ENCODE measurements at regions of chr11 and their contacts with region 1.

Region 1: DNA sequence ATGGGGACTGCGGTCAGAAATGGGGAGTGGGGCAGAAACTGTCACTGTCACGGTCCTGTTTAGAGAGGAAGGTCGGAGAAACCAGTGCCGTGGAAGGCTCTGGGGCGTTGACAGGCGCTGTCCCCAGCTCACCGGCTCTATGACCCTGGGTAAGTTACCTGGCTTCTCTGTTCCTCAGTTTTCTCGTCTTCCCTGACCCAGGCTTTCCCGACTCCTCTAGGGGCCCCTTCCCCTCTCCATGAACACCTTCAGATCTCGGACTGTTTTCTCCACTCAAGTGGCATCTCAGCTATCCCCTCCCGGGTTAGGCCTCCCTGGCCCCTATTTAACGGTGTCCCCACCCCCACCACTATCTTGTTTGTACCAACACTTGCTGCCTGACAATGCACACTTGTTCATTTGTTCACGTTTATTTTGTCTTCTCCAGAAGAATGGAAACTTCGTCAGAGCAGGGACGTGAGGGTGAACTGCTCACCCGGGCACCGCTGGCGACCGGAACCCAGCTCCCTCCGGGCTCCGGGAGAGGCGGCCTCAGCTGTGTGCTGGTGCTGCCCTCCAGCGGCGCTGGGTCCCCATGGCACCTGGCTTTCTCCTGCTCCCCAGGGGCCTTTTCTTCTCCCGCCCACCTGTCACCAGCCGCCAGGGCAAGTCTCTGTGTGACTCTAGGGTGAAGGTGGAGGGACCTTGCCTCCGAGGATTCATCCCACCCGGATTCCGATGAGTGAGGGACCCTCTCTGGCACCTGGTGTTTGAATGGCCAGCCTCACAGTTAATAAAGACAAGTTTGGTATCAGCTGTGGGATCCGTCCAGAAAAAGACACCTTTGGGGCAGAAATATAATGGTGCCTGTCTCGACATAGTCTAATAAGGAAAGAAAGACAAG is 33.1 kb upstream of the SLC35C1 start:
- DNase-seq: peak; percentile 67 to 82 (median 75)
- H3K4me3 ChIP-seq: peak overlapping the region; percentile 91
- H3K4me3 Mint-ChIP-seq: peak overlapping the region; percentile 86 to 99 (median 92)
- H3K27ac ChIP-seq: peak overlapping the region; percentile 18
- H3K27ac Mint-ChIP-seq: peak overlapping the region; percentile 65 to 98 (median 86)
- H3K4me1 ChIP-seq: peaks cover 8% of the 10 kb centered on the region
- H3K4me1 Mint-ChIP-seq: peaks cover 17 to 27% (median 26%) of the 10 kb centered on the region in 3 donors
- H3K27me3 ChIP-seq: peaks cover 5% of the 10 kb centered on the region
- H3K27me3 Mint-ChIP-seq: peaks cover 2 to 4% of the 10 kb centered on the region in 2 donors

Region 2: DNA sequence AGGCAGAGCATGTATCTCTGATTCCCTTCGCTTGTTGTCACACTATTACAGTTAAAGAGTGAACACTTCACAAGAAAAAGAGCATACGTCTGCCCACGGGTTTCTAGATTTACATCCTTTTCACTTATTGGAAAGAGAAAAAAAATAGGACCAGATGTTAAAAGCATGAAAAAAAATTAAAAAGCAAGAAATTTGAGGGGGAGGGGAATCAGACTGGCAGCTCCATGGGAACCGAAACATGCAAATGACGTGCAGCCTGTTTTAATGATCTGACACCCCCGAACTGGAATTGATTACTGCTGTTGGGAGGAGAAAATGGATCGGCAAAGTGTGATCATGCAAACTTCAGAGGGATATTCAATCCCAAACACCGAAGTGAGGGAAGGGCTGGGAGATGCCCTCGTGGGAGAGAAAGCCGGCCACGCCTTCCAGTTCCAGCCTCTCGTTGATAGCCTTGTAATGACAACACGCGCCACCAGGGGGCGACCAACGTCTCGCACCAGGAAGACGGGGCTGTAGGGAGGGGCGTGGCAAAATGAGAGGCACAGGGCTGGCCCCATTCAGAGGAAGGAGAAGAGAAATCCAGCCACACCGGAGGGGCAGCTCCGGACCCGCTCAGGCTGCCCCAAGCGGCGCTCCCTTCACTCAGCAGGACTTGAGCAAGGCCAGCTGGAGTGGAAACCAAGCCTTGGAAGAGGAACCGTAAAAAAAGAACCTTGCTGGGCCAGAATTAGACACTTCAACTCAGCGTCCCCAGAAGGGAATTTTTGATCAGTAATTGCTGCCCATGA is 431.9 kb before region 1 on chr11:
- CTCF ChIA-PET with region 1: interaction called, 10 read pairs
- POLR2A ChIA-PET with region 1: no interaction called
- DNase-seq: peak; percentile 83 to 94 (median 89)
- H3K4me3 ChIP-seq: peak overlapping the region; percentile 51
- H3K4me3 Mint-ChIP-seq: peak overlapping the region in 6 of 7 donors; percentile 3 to 75 (median 68)
- H3K27ac ChIP-seq: no peak overlapping the region
- H3K27ac Mint-ChIP-seq: peak overlapping the region in 1 of 8 donors; percentile 14
- H3K4me1 ChIP-seq: peaks cover 4% of the 10 kb centered on the region
- H3K4me1 Mint-ChIP-seq: peaks cover 10 to 11% (median 11%) of the 10 kb centered on the region in 3 donors
- H3K27me3 ChIP-seq: no peaks in the 10 kb centered on the region
- H3K27me3 Mint-ChIP-seq: peaks cover 22 to 31% of the 10 kb centered on the region in 2 donors

Region 3: DNA sequence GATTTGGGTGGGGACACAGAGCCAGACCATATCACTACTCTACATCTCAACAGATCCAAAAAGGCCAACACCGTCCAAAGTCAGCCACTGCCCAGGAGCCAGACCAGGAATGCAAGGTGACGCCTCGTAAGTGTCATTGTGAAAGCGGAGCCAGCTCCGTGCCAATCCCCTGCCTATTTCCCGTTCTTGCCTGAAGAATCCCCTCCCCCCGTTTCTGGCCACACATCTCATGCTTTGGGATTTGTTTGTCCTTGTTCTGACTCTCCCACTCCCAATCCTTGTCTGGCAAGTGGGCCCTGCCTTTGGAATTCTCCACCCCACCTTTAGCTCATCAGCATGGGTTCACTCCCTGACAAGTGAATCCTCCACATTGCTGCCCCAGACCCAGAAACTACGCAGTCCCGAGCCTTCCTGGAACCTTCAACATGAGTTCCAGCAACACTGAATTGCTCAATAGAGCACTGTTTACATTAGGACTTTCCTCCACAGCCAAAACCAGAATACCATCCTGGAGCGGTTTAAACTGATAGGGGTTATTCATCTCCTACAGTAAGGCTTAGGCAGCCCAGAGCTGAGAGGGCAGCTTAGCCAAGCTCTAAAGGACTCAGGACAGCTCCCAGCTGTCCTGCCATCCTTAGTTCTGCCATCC is 27.1 kb after region 1 on chr11:
- CTCF ChIA-PET with region 1: interaction called, 17 read pairs
- POLR2A ChIA-PET with region 1: interaction called, 3 read pairs
- DNase-seq: no peak
- H3K4me3 ChIP-seq: no peak overlapping the region
- H3K4me3 Mint-ChIP-seq: no peak overlapping the region
- H3K27ac ChIP-seq: no peak overlapping the region
- H3K27ac Mint-ChIP-seq: no peak overlapping the region
- H3K4me1 ChIP-seq: no peaks in the 10 kb centered on the region
- H3K4me1 Mint-ChIP-seq: peaks cover 0 to 4% (median 1%) of the 10 kb centered on the region in 3 donors
- H3K27me3 ChIP-seq: no peaks in the 10 kb centered on the region
- H3K27me3 Mint-ChIP-seq: no peaks in the 10 kb centered on the region

Region 4: DNA sequence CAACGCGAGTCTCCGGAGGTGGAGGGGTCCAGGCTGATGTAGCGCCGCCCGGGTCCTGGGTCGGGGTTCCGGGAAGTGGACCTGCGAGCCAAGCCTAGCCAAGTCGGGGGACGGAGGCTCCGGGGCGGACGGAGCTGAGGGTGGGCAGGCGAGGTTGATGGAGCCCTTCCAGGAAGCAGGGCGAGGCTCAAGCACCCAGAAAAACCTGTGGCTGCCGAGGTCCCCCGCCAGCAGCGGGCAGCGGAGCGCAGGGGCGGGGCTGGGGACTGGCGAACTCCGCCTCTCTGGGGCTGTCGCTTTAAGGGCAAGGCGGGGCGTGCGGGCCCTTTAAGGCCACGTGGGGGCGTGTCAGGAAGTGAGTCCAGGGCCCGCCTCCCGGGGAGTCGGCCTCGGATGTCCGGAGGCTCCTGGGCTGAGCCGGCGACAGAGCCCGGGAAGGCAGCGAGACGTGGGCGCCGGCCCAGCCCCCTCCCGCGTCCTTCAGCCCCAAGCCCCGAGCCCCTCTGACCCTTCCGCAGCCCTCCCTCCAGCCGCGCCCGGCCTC is 33.0 kb after region 1 on chr11 and contains the start of gene SLC35C1:
- CTCF ChIA-PET with region 1: interaction called, 17 read pairs
- POLR2A ChIA-PET with region 1: interaction called, 3 read pairs
- DNase-seq: peak; percentile 92 to 96 (median 95)
- H3K4me3 ChIP-seq: peak within 1 kb of the TSS; percentile 83
- H3K4me3 Mint-ChIP-seq: peak within 1 kb of the TSS; percentile 87 to 99 (median 92)
- H3K27ac ChIP-seq: peak within 1 kb of the TSS; percentile 74
- H3K27ac Mint-ChIP-seq: peak within 1 kb of the TSS; percentile 80 to 98 (median 91)
- H3K4me1 ChIP-seq: peaks cover 37% of the 10 kb centered on the region
- H3K4me1 Mint-ChIP-seq: peaks cover 31 to 54% (median 39%) of the 10 kb centered on the region in 3 donors
- H3K27me3 ChIP-seq: no peaks in the 10 kb centered on the region
- H3K27me3 Mint-ChIP-seq: no peaks in the 10 kb centered on the region
- total RNA-seq, gene SLC35C1: 17.7 to 18.1 TPM

Region 5: DNA sequence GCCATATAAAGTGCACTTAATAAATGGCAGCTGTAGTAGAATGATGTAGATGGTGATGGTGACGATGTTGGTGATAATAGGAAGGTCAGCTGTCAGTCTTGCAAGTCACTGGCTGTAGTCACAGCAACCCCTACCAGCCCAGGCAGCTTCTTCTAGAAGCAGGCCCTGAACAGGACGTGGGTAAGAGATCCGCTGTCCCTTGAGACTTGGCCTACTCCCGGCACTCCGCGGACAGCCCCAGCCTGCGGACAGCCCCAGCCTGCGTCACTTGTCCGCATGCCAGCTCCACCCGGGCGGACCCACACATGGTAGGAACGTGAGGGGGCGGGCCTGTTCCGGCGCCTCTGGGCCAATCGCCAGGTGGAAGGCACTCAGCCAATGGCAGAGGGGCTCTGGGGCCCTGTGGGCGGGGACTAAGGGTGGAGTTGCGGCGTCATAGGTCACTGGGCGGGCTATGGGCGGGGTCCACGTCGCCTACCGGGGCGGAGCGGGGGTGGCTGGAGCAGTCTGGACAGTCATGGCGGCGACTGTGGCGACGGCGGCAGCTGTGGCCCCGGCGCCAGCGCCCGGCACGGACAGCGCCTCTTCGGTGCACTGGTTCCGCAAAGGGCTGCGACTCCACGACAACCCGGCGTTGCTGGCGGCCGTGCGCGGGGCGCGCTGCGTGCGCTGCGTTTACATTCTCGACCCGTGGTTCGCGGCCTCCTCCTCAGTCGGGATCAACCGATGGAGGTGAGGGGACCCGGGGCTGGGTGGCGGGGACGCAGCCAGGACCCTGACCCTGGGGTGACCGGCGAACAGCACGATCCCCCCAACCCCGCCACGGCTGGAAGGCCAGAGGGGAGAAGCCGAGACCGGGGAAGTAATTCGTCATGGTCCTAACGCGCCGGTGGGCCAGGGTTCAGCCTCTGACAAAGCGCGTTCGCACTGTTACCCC is 75.4 kb after region 1 on chr11 and contains the start of gene CRY2:
- CTCF ChIA-PET with region 1: interaction called, 10 read pairs
- POLR2A ChIA-PET with region 1: interaction called, 4 read pairs
- DNase-seq: peak; percentile 97 to 99 (median 99)
- H3K4me3 ChIP-seq: peak within 1 kb of the TSS; percentile 85
- H3K4me3 Mint-ChIP-seq: peak within 1 kb of the TSS; percentile 78 to 94 (median 88)
- H3K27ac ChIP-seq: peak within 1 kb of the TSS; percentile 97
- H3K27ac Mint-ChIP-seq: peak within 1 kb of the TSS; percentile 87 to 99 (median 97)
- H3K4me1 ChIP-seq: peaks cover 42% of the 10 kb centered on the region
- H3K4me1 Mint-ChIP-seq: peaks cover 39 to 69% (median 60%) of the 10 kb centered on the region in 3 donors
- H3K27me3 ChIP-seq: no peaks in the 10 kb centered on the region
- H3K27me3 Mint-ChIP-seq: no peaks in the 10 kb centered on the region
- total RNA-seq, gene CRY2: 16.6 to 17.8 TPM

Measured in CD8-positive, alpha-beta memory T cell (primary cell).